K562 (cell line): ENCODE measurements at regions of chr5 and their contacts with region 1.

Region 1: GRCh38 chr5:170623576-170624181 is 119.9 kb downstream of the KCNIP1 start:
- DNase-seq: peak; percentile 55 to 65 (median 56)
- ATAC-seq: peak; percentile 93
- H3K4me3 ChIP-seq: no peak overlapping the region
- H3K27ac ChIP-seq: no peak overlapping the region
- H3K4me1 ChIP-seq: no peaks in the 10 kb centered on the region
- H3K27me3 ChIP-seq: peaks cover 0 to 9% of the 10 kb centered on the region in 2 experiments; a peak in 1 of 5 replicates
- CTCF ChIP-seq: peak; percentile 62 to 78 (median 73)
- EP300 ChIP-seq: no peak
- POLR2A ChIP-seq: no peak
- RAD21 ChIP-seq: peak in 1 of 2 experiments; percentile 65; a peak in 3 of 4 replicates

Region 2: DNA sequence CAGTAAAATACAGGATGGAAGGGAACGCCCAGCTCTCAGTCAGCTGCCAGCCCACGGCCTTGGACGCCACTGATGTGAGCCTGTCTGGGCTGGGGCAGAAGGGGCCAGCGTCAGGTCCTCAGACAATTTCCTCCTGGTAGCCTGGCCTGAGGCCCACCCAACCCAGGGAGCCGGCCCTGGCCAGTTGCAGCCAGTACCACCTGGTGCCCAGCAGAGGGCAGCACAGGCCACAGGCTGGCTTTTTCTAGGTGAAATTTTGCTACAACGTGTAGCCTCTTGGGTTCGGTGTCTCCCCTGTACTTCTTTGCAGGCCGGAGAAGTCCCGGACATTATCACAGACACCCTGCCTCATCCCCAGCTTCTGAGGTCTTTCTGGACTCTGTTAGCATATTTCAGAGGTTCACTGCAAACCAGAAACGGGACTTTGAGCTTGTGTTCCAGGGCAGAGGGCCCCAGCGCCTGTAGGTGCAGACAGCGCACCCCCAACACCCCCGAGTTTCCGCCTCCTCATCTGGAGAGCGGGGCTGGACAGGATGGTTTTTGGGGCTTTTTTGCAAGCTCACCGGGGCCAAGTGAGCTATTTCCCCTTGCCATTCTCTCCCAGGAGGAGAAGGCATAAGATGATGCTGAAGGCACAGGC is 188.6 kb before region 1 on chr5:
- CTCF ChIA-PET with region 1: interaction called, 5 read pairs
- POLR2A ChIA-PET with region 1: no interaction called
- in situ Hi-C with region 1: loop called (anchors 5 kb)
- intact Hi-C with region 1: loop called (anchors 1 kb)
- DNase-seq: peak; percentile 62 to 76 (median 74)
- ATAC-seq: peak; percentile 96
- H3K4me3 ChIP-seq: no peak overlapping the region
- H3K27ac ChIP-seq: no peak overlapping the region
- H3K4me1 ChIP-seq: peaks cover 0 to 3% of the 10 kb centered on the region in 2 experiments; a peak in 1 of 5 replicates
- H3K27me3 ChIP-seq: peaks cover 2 to 40% of the 10 kb centered on the region in 2 experiments; a peak in 2 of 5 replicates
- CTCF ChIP-seq: peak; percentile 89 to 92 (median 90)
- EP300 ChIP-seq: no peak
- POLR2A ChIP-seq: no peak
- RAD21 ChIP-seq: peak; percentile 64 to 86

Region 3: GRCh38 chr5:170603578-170604565 is 19.8 kb before region 1 on chr5:
- CTCF ChIA-PET with region 1: no interaction called
- POLR2A ChIA-PET with region 1: interaction called, 6 read pairs
- in situ Hi-C with region 1: no loop called
- intact Hi-C with region 1: loop called (anchors 1 kb)
- DNase-seq: peak; percentile 69 to 91 (median 88)
- ATAC-seq: peak; percentile 99
- H3K4me3 ChIP-seq: no peak overlapping the region
- H3K27ac ChIP-seq: no peak overlapping the region
- H3K4me1 ChIP-seq: no peaks in the 10 kb centered on the region
- H3K27me3 ChIP-seq: peaks cover 0 to 40% of the 10 kb centered on the region in 2 experiments; a peak in 1 of 5 replicates
- CTCF ChIP-seq: peak; percentile 77 to 84 (median 83)
- EP300 ChIP-seq: no peak
- POLR2A ChIP-seq: no peak
- RAD21 ChIP-seq: peak; percentile 32 to 72